BJ (cell line): ENCODE measurements at regions of chr18 and their contacts with region 1.

Region 1: GRCh38 chr18:11518788-11519685 is 90.4 kb upstream of the SLC35G4 start:
- DNase-seq: no peak
- H3K4me3 ChIP-seq: no peak overlapping the region
- H3K27me3 ChIP-seq: no peaks in the 10 kb centered on the region
- CTCF ChIP-seq: peak; percentile 70

Region 2: GRCh38 chr18:11259469-11260150 is 259.4 kb before region 1 on chr18:
- CTCF ChIA-PET with region 1: no interaction called
- POLR2A ChIA-PET with region 1: no interaction called
- DNase-seq: no peak
- H3K4me3 ChIP-seq: no peak overlapping the region
- H3K27me3 ChIP-seq: 0 out of 2 replicates have a peak, but pooled peaks cover 1% of the 10 kb centered on the region
- CTCF ChIP-seq: no peak

Region 3: GRCh38 chr18:11310476-11311086 is 208.5 kb before region 1 on chr18:
- CTCF ChIA-PET with region 1: interaction called, 21 read pairs
- POLR2A ChIA-PET with region 1: no interaction called
- DNase-seq: no peak
- H3K4me3 ChIP-seq: no peak overlapping the region
- H3K27me3 ChIP-seq: no peaks in the 10 kb centered on the region
- CTCF ChIP-seq: peak; percentile 81

Region 4: DNA sequence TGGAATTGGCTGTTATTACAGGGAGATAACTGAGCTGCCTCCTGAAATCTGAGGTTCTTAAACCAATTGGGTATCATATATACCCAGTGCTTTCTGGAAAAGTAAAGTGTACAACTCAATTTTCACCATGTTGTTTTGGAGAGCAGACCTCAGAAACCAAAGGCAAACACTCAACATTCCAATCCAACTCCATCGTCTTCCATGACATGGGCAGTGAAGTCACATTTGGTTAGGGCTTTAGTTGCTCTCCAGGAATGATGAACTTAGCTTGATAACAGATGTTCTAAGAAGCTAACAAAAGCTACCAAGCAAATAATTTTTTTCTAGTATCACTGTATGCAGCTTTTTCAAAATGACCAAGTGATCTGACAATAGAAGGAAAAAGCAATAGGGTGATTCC is 16.7 kb before region 1 on chr18:
- CTCF ChIA-PET with region 1: interaction called, 10 read pairs
- POLR2A ChIA-PET with region 1: no interaction called
- DNase-seq: peak; percentile 31
- H3K4me3 ChIP-seq: no peak overlapping the region
- H3K27me3 ChIP-seq: peaks cover 3% of the 10 kb centered on the region; the same call in 1 of the 2 replicates
- CTCF ChIP-seq: no peak

Region 5: GRCh38 chr18:11529081-11529480 is 10.0 kb after region 1 on chr18:
- CTCF ChIA-PET with region 1: interaction called, 17 read pairs
- POLR2A ChIA-PET with region 1: no interaction called
- DNase-seq: no peak
- H3K4me3 ChIP-seq: no peak overlapping the region
- H3K27me3 ChIP-seq: no peaks in the 10 kb centered on the region
- CTCF ChIP-seq: no peak

Region 6: DNA sequence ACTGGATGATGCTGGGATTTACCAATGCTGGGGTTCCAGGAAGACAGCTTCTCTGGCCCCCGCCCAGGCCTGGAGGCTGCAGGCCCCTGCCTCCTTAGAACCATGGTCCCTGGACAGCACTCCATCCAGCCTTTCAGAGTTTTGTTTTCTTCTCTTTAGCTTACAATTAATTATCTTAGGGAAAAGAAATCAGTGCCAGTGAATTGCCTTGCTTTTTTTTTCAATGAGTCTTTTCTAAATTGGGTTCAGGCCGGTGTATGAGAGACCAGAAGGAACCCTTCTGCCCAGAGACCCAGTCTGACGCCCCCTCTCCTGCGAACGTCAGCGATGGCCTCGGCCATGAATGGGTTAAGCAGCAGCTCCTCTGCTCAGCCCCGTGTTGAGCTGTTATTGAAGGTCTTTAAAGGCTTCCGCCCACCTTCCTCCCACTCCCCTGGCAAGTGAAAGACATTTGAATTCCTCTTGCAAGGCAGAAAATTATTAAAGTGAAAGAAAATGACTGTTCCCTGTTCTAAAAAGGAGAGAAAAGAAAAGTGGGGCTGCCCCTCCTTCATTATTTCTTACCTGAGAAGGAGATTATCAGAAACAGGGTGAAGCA is 266.5 kb after region 1 on chr18:
- CTCF ChIA-PET with region 1: no interaction called
- POLR2A ChIA-PET with region 1: no interaction called
- DNase-seq: no peak
- H3K4me3 ChIP-seq: no peak overlapping the region
- H3K27me3 ChIP-seq: peaks cover 7% of the 10 kb centered on the region
- CTCF ChIP-seq: no peak